ENCODE measurements at regions of chr1 and their contacts with region 1.

Region 1: DNA sequence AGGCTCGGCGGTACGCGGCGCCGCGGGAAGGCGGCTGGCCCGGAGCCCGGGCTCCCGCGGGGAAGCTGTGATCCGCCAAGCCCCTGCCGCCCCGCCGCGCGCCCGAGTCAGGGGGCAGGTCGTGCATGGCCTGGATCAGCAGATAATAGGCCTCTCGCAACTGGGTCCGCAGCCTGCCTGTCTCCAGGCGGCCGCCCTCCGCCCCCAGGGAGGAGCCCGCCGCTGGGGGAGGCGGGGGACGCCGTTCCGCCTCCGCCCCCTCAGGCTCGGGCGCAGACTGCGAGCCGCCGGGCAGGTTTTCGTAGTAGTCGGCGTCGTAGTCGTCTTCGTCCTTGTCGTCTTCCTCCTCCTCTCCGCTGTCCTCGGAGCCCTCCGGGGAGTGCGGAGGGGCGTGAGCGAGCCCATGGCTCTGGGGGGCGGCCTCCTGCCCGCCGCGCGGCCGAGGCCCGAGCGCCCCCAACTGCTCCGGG is at the start of gene SYDE2:
- DNase-seq: peak; percentile 67 to 77
- ATAC-seq: peak; percentile 91 to 95 (median 94)
- H3K4me3 ChIP-seq: peak within 1 kb of the TSS; percentile 47 to 85 (median 74)
- H3K27ac ChIP-seq: peak within 1 kb of the TSS; percentile 79 to 96 (median 95)
- H3K4me1 ChIP-seq: peaks cover 0 to 24% (median 9%) of the 10 kb centered on the region in 9 donors
- H3K27me3 ChIP-seq: peaks cover 0 to 74% (median 24%) of the 10 kb centered on the region in 7 donors
- CTCF ChIP-seq: no peak
- total RNA-seq, gene SYDE2: 16.1 to 24.7 (median 21.4) TPM

Region 2: DNA sequence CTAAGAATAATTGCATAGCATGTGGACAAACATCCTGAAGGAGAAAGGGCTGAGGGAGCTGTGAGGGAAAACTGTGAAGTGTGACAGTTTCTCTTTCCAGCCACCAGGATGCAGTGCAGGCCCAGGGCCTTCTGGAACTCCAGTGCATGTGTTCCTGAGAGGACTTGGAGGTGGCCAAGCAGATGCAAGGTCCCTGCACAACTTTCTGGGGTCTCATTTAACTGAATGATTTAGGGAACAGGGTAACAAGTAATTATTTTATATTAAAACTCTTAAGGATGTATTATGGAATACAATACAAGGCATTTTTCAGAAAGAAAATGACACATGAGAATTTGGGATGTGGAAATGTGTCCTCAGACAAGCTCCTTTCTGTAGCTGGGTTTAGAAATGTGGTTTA is 91.4 kb before region 1 on chr1:
- intact Hi-C with region 1: no loop called
- DNase-seq: peak; percentile 32 to 38
- ATAC-seq: peak in 7 of 8 donors; percentile 77 to 93 (median 88)
- H3K4me3 ChIP-seq: no peak overlapping the region
- H3K27ac ChIP-seq: no peak overlapping the region
- H3K4me1 ChIP-seq: no peaks in the 10 kb centered on the region
- H3K27me3 ChIP-seq: no peaks in the 10 kb centered on the region
- CTCF ChIP-seq: peak; percentile 42 to 78 (median 74)

Region 3: GRCh38 chr1:85134576-85135395 is 66.1 kb before region 1 on chr1:
- intact Hi-C with region 1: loop called in 1 of 10 experiments (anchors 5 kb)
- DNase-seq: no peak
- ATAC-seq: no peak
- H3K4me3 ChIP-seq: no peak overlapping the region
- H3K27ac ChIP-seq: no peak overlapping the region
- H3K4me1 ChIP-seq: peaks cover 0 to 21% (median 5%) of the 10 kb centered on the region in 9 donors
- H3K27me3 ChIP-seq: no peaks in the 10 kb centered on the region
- CTCF ChIP-seq: no peak

Region 4: DNA sequence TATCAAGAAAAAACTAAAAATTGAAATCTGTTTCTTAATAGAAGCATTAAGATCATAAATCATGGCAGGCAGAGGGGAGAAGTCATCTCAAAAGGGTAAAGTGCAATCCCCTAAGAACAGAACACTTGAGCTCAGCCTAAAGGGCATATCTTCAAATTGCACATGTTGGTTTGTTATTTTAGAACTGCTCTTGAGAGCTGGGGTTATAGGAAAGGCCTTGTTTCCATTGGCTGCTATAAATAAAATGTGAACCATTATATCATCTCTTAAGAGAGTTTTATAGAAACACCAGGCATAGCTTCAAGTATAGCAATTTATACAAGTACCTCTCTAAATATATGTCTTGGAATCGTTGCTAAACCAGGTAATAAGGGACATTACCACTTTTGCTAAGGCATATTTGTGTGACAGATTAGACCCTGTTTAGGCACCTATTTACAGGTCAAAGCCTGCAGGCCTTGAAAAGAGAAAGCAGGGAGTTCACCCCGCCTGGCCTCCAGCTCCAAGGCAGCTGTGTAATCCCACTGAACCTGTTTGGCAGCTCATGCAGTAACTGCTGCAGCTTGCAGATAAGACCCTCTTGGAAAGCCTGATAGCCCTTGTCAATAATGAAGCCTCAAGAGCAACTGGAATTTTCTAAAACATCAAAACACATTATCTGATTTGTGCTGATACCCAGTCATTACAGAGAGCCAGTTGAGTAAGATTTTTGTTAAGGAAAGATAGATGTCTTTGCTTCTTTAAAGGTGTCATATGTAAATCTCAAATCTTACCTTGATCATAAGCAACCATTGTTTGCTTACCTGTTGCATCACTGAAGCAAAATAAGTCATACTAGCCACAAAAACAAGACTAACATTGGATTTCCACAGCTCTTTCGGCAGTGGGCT is 24.1 kb after region 1 on chr1:
- intact Hi-C with region 1: loop called in 1 of 10 experiments (anchors 2 kb)
- DNase-seq: peak; percentile 25 to 27
- ATAC-seq: peak; percentile 72 to 89 (median 82)
- H3K4me3 ChIP-seq: no peak overlapping the region
- H3K27ac ChIP-seq: peak overlapping the region; percentile 1 to 86 (median 72)
- H3K4me1 ChIP-seq: peaks cover 0 to 41% (median 17%) of the 10 kb centered on the region in 9 donors
- H3K27me3 ChIP-seq: peaks cover 0 to 7% (median 0%) of the 10 kb centered on the region in 7 donors
- CTCF ChIP-seq: no peak